Motor neuron (in vitro differentiated cells): ENCODE measurements at regions of chr7 and their contacts with region 1.

Region 1: DNA sequence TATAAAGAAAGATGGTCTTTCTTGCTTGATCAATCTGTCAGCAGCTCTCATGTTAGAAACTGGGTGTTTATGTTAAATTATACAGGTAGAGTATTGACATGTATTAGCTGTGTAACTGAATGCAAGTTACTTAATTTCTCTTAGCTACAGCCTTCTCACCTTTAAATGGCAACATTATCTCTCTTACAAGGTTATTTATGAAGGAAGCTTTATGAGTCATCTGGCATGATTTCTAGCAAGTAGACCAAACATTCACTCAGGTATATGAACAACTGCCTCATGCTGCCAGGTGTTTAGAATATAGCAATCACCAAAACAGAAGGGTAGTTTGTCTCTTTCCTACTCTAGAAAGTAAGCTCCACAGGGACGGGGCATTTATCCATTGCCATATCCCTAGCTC is 8.5 kb downstream of the ARL4A start:
- ATAC-seq: peak in 1 of 8 experiments; percentile 33
- H3K4me3 ChIP-seq: no peak overlapping the region
- H3K27ac ChIP-seq: no peak overlapping the region
- H3K4me1 ChIP-seq: peaks cover 6 to 8% of the 10 kb centered on the region in 2 donors

Region 2: DNA sequence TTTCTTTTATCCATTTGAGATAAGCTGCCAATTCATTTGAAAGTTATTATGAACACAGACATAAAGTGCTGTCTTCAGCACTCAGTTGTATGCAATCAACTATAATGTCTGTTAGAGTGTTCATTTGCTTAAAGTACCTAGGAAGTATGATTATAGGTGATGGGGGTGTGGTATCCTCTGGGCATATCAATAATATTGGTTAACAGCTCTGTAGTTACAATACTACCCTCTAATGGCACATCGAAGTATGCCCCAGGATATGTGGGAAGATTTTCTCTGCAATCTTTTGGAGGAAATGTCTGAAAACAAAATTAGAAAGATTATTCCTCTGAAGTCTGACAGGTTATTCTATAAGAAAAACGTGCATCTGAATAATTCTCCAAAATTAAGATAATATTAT is 421.1 kb after region 1 on chr7:
- in situ Hi-C with region 1: loop called in 1 of 9 experiments (anchors 10 kb)
- ATAC-seq: peak in 1 of 8 experiments; percentile 56
- H3K4me3 ChIP-seq: no peak overlapping the region
- H3K27ac ChIP-seq: no peak overlapping the region
- H3K4me1 ChIP-seq: peaks cover 4 to 5% of the 10 kb centered on the region in 2 donors